PC-9 (cell line): ENCODE measurements at regions of chr19 and their contacts with region 1.

Region 1: GRCh38 chr19:12666265-12667048 is at the starts of genes MAN2B1 and WDR83:
- DNase-seq: peak; percentile 65 to 72
- H3K4me3 ChIP-seq: peak within 1 kb of the TSS; percentile 98
- H3K27ac ChIP-seq: no peak within 1 kb of the TSS
- H3K4me1 ChIP-seq: peaks cover 29% of the 10 kb centered on the region
- H3K27me3 ChIP-seq: no peaks in the 10 kb centered on the region
- CTCF ChIP-seq: no peak
- total RNA-seq, gene MAN2B1: 41.5 and 48.2 TPM in 2 replicates
- total RNA-seq, gene WDR83: 12.9 and 21.2 TPM in 2 replicates

Region 2: DNA sequence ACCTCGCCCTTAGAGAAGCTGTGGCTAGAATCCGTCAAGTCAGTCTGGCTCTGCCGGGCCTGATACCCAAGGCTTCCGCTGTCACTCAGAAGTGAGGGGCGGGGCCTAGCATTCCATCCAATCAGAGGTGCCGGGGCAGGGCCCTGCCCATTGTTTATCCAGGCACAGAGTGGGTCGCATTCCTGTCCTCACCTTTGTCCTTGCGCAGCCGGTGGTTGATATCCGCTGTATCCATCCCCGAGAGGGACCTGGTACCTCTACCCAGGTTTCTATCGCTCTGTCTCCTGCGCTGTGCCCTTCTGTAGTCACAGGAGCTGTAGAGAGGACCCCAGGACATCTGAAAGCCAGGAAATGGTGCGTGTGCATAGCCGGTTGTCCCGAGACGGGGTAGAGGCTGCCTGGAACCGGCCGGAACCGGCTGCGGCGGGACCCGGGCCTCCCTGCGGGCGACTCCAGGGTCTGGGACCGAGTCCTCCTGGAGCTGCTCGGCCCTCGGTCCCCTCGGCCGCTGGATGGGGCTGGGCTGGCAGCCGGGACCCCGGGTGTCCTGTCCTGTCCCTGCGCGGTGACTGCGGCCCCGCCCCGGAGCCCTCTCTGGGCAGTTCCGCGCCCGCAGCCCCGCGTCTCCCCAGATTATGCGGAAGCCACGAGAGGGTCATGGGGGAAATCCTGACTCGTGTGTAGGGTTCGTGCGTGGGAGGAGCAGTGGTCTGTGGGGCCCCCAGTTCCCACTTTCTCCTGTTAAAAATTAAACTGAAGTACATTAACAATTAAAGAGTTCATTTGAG is 701.4 kb before region 1 on chr19 and contains the start of gene ZNF763:
- CTCF ChIA-PET with region 1: no interaction called
- POLR2A ChIA-PET with region 1: no interaction called
- intact Hi-C with region 1: loop called (anchors 2 kb)
- DNase-seq: peak in 1 of 2 experiments; percentile 79
- H3K4me3 ChIP-seq: no peak within 1 kb of the TSS
- H3K27ac ChIP-seq: no peak within 1 kb of the TSS
- H3K4me1 ChIP-seq: no peaks in the 10 kb centered on the region
- H3K27me3 ChIP-seq: peaks cover 7% of the 10 kb centered on the region; the same call in 1 of the 2 replicates
- CTCF ChIP-seq: no peak
- total RNA-seq, gene ZNF763: 0.55 and 0.83 TPM in 2 replicates

Region 3: GRCh38 chr19:12052497-12053169 is 613.8 kb before region 1 on chr19 and contains the start of gene ZNF878:
- CTCF ChIA-PET with region 1: no interaction called
- POLR2A ChIA-PET with region 1: no interaction called
- intact Hi-C with region 1: loop called (anchors 10 kb)
- DNase-seq: peak in 1 of 2 experiments; percentile 86
- H3K4me3 ChIP-seq: peak within 1 kb of the TSS; percentile 43
- H3K27ac ChIP-seq: no peak within 1 kb of the TSS
- H3K4me1 ChIP-seq: no peaks in the 10 kb centered on the region
- H3K27me3 ChIP-seq: no peaks in the 10 kb centered on the region
- CTCF ChIP-seq: no peak
- total RNA-seq, gene ZNF878: 0.33 and 0.46 TPM in 2 replicates

Region 4: GRCh38 chr19:12484371-12485051 is 181.9 kb before region 1 on chr19 and contains the start of gene ZNF709:
- CTCF ChIA-PET with region 1: interaction called, 10 read pairs
- POLR2A ChIA-PET with region 1: no interaction called
- intact Hi-C with region 1: no loop called
- DNase-seq: peak; percentile 58 to 81
- H3K4me3 ChIP-seq: peak within 1 kb of the TSS; percentile 57
- H3K27ac ChIP-seq: no peak within 1 kb of the TSS
- H3K4me1 ChIP-seq: no peaks in the 10 kb centered on the region
- H3K27me3 ChIP-seq: 0 out of 2 replicates have a peak, but pooled peaks cover 4% of the 10 kb centered on the region
- CTCF ChIP-seq: no peak
- total RNA-seq, gene ZNF709: 1.6 and 1.8 TPM in 2 replicates

Region 5: GRCh38 chr19:12502149-12502548 is 164.3 kb before region 1 on chr19:
- CTCF ChIA-PET with region 1: no interaction called
- POLR2A ChIA-PET with region 1: no interaction called
- intact Hi-C with region 1: no loop called
- DNase-seq: no peak
- H3K4me3 ChIP-seq: no peak overlapping the region
- H3K27ac ChIP-seq: no peak overlapping the region
- H3K4me1 ChIP-seq: no peaks in the 10 kb centered on the region
- H3K27me3 ChIP-seq: no peaks in the 10 kb centered on the region
- CTCF ChIP-seq: no peak